RWPE1 (cell line): ENCODE measurements at regions of chr10 and their contacts with region 1.

Region 1: DNA sequence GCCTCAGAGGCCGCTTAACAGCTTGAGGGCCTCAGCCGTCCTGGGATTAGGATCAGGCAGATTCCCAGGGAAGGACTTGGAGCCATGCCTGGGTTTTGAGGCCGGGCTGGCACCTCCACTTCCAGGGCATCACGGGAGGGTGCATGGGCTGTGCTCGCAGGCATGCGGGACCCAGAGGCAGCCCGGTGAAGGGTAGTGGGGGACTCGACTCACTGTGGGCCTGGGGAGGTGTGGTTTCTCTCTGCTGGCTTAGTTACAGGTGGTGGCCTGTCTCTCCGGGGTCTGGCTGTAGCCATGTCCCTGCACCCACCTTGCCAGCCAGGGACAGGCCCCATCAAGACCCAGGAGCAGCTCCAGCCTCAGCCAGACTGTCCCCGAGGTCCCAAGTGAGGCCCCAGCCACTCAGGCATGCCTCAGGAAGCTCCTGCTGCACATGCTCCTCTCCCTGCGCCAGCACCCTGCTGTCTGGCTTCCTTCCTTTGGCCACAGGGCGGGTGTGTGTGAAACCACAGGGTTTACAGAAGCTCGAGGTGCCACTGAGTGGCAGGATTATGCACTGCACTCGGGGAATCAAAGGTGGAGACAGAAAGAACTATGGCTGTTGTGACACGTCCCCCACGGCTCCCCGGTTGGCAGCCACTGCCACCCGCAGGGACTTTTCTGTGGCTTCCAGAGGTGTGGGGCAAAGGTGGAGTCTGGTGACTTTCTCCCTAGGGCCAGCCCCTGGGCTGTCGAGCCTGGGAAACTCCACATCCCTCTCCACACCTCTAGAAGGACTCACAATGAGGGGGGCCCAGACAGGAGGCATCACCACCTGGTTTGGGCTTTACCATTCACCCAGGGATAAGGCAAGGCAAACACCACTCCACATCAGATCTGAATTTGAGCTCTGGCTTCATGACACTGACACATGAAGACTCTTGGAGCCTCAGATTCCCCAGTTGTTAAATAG is 19.7 kb downstream of the GOLGA7B start:
- DNase-seq: peak; percentile 95
- H3K27ac ChIP-seq: peak overlapping the region; percentile 61
- CTCF ChIP-seq: peak; percentile 79

Region 2: DNA sequence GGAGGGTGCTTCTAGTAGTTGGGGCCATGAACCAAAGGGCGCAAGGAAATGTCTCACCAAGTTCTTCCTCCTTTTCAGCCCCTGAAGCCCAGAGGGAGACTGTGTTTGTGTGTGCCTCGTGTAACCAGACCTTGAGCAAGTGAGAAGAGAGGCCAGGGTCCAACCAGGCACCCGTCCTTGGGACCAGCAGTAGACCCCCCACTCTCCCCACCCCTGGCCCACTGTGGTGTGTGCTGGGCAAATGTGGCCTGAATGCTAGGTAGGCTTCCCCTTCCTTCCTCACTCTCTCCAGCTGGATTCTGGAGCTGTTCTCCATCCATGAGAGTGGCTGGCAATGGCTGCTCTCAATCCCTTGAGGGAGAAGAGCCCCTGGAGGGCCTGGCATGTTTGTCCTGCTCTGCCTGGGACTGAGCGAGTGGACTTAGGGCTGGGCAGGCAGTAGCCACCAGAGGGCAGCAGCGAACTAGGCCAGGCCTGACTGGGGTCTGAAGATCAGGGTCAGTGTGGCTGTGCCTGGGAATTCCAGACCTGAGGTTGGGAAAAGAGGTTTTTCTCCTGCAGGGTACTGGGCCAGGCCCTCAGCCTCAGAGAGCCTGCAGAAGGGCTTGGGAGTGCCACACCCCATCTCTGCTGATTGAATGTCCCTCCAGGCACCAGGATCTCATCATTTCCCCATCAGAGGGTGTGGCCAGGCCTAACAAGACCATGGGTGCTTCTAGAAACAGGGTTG is 110.0 kb before region 1 on chr10:
- CTCF ChIA-PET with region 1: interaction called, 14 read pairs
- POLR2A ChIA-PET with region 1: no interaction called
- DNase-seq: peak; percentile 74
- H3K27ac ChIP-seq: peak overlapping the region; percentile 16; the same call in 1 of the 2 replicates
- CTCF ChIP-seq: peak; percentile 86

Region 3: DNA sequence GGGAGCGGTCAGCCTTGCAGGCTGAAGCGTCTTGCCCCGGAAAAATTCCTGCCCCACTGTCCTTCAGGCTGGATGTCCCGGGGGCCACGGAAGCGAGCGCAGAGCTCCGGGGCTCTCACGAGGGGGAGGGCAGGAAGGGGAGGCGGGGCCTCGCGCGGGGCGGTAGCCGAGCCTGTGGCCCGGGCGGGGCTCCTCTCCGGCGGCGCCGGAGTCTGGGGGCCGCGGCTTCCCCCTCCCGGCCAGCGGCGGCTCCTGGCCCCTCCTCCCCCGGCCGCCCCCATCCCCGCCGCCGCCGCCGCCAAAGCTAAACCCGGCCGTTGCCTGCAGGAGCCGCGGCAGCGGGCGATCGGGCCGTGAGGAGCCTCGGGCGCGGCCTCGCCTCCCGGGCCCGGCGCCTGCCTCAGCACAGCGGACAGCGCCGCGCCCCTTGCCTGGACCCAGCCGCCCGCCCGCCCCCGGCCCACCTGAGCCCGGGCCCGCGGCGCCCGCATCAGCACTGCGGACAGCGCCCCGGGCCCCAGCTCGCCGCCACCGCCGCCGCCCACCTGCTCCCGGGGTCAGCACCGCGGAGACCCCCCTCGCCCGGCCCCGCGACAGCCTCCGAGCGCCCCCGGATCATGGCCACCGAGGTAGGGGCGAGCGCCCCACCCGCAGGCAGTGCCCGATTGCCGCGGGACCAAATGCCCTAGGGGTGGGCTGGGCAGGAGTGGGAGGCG is 19.5 kb before region 1 on chr10 and contains the start of gene GOLGA7B:
- CTCF ChIA-PET with region 1: interaction called, 11 read pairs
- POLR2A ChIA-PET with region 1: no interaction called
- DNase-seq: peak; percentile 71
- H3K27ac ChIP-seq: no peak within 1 kb of the TSS
- CTCF ChIP-seq: no peak